ENCODE measurements at regions of chr9 and their contacts with region 1.

Region 1: GRCh38 chr9:5450359-5451091 is at the start of gene CD274:
- DNase-seq: peak; percentile 66 to 85 (median 79)
- H3K4me3 ChIP-seq: peak within 1 kb of the TSS; percentile 88
- H3K4me3 Mint-ChIP-seq: peak within 1 kb of the TSS; percentile 86 to 98 (median 96)
- H3K27ac ChIP-seq: peak within 1 kb of the TSS; percentile 92
- H3K27ac Mint-ChIP-seq: peak within 1 kb of the TSS; percentile 92 to 99 (median 98)
- H3K4me1 ChIP-seq: peaks cover 42% of the 10 kb centered on the region
- H3K4me1 Mint-ChIP-seq: peaks cover 53 to 91% (median 85%) of the 10 kb centered on the region in 3 donors
- H3K27me3 ChIP-seq: no peaks in the 10 kb centered on the region
- H3K27me3 Mint-ChIP-seq: no peaks in the 10 kb centered on the region
- total RNA-seq, gene CD274: 13.2 to 17.6 TPM

Region 2: GRCh38 chr9:5518171-5518936 is 67.8 kb after region 1 on chr9:
- CTCF ChIA-PET with region 1: no interaction called
- POLR2A ChIA-PET with region 1: no interaction called
- DNase-seq: no peak
- H3K4me3 ChIP-seq: no peak overlapping the region
- H3K4me3 Mint-ChIP-seq: no peak overlapping the region
- H3K27ac ChIP-seq: no peak overlapping the region
- H3K27ac Mint-ChIP-seq: peak overlapping the region in 1 of 8 donors; percentile 2
- H3K4me1 ChIP-seq: no peaks in the 10 kb centered on the region
- H3K4me1 Mint-ChIP-seq: peaks cover 4 to 17% (median 13%) of the 10 kb centered on the region in 3 donors
- H3K27me3 ChIP-seq: no peaks in the 10 kb centered on the region
- H3K27me3 Mint-ChIP-seq: no peaks in the 10 kb centered on the region

Region 3: DNA sequence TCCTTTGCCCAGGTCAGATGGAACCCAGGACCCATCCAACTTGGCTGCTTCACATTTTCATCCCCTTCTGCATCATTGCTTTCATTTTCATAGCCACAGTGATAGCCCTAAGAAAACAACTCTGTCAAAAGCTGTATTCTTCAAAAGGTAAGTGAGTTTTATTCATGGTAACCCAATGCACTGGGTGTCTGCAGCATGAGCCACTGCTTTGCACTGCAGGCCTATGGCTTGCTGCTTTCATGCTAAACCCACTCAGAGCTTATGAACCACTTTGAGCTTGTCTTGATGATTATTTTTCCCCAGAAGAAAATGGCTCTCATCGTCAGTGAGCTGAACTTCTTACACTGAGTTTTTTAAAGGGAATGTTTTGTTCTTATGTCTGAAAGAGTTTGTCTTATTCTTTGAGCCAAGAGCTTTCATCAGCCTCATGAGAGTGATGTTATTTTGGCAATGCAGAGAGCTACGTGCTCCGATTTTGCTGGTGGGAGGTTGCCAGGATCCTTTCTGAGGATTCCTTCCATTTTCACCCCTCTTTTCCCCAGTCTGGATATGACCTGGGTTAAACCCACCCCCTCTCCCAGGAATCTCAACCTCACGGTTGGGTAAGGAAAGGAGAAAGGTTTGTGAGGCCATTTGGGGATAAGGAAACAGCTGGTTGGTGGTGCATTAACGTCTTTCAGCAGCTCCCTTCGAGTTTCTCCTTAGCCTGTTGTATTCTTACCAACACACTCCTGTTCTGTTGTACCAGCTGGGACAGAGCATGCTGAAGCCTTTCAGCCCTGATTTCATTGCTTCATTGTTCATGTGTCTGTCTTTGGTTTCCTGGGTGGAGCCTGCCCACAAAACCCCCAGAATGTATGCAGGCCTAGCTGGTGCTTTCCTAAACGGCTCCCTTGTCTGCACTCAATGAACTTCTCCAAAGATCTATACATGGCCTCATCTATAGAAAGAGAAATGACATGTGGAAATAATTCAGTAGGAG is 107.4 kb after region 1 on chr9:
- CTCF ChIA-PET with region 1: interaction called, 10 read pairs
- POLR2A ChIA-PET with region 1: no interaction called
- DNase-seq: peak; percentile 19 to 76 (median 51)
- H3K4me3 ChIP-seq: no peak overlapping the region
- H3K4me3 Mint-ChIP-seq: peak overlapping the region in 6 of 7 donors; percentile 59 to 76 (median 68)
- H3K27ac ChIP-seq: no peak overlapping the region
- H3K27ac Mint-ChIP-seq: peak overlapping the region; percentile 82 to 95 (median 92)
- H3K4me1 ChIP-seq: peaks cover 34% of the 10 kb centered on the region
- H3K4me1 Mint-ChIP-seq: peaks cover 40 to 64% (median 51%) of the 10 kb centered on the region in 3 donors
- H3K27me3 ChIP-seq: no peaks in the 10 kb centered on the region
- H3K27me3 Mint-ChIP-seq: peaks cover 0 to 3% of the 10 kb centered on the region in 2 donors

Region 4: GRCh38 chr9:5582835-5583195 is 132.3 kb after region 1 on chr9:
- CTCF ChIA-PET with region 1: interaction called, 56 read pairs
- POLR2A ChIA-PET with region 1: interaction called, 18 read pairs
- DNase-seq: peak in 2 of 5 donors; percentile 33 to 49
- H3K4me3 ChIP-seq: no peak overlapping the region
- H3K4me3 Mint-ChIP-seq: peak overlapping the region in 1 of 7 donors; percentile 9
- H3K27ac ChIP-seq: no peak overlapping the region
- H3K27ac Mint-ChIP-seq: peak overlapping the region in 4 of 8 donors; percentile 14 to 43 (median 20)
- H3K4me1 ChIP-seq: peaks cover 28% of the 10 kb centered on the region
- H3K4me1 Mint-ChIP-seq: peaks cover 39 to 56% (median 41%) of the 10 kb centered on the region in 3 donors
- H3K27me3 ChIP-seq: no peaks in the 10 kb centered on the region
- H3K27me3 Mint-ChIP-seq: peaks cover 0 to 2% of the 10 kb centered on the region in 2 donors